Activated CD4-positive, alpha-beta T cell treated with anti-CD3 and anti-CD28 coated beads for 36 hours (primary cell): ENCODE measurements at regions of chr5 and their contacts with region 1.

Region 1: GRCh38 chr5:40223884-40224402 is 455.8 kb upstream of the PTGER4 start:
- DNase-seq: peak; percentile 63
- ATAC-seq: peak; percentile 87
- H3K4me3 Mint-ChIP-seq: peak overlapping the region; percentile 50
- H3K27ac Mint-ChIP-seq: peak overlapping the region; percentile 94
- H3K4me1 Mint-ChIP-seq: peaks cover 64% of the 10 kb centered on the region
- H3K27me3 Mint-ChIP-seq: no peaks in the 10 kb centered on the region

Region 2: GRCh38 chr5:40171971-40172370 is 52.0 kb before region 1 on chr5:
- CTCF ChIA-PET with region 1: no interaction called
- POLR2A ChIA-PET with region 1: no interaction called
- intact Hi-C with region 1: loop called in 1 of 2 experiments (anchors 5 kb)
- DNase-seq: no peak
- ATAC-seq: no peak
- H3K4me3 Mint-ChIP-seq: no peak overlapping the region
- H3K27ac Mint-ChIP-seq: no peak overlapping the region
- H3K4me1 Mint-ChIP-seq: peaks cover 13% of the 10 kb centered on the region
- H3K27me3 Mint-ChIP-seq: no peaks in the 10 kb centered on the region

Region 3: DNA sequence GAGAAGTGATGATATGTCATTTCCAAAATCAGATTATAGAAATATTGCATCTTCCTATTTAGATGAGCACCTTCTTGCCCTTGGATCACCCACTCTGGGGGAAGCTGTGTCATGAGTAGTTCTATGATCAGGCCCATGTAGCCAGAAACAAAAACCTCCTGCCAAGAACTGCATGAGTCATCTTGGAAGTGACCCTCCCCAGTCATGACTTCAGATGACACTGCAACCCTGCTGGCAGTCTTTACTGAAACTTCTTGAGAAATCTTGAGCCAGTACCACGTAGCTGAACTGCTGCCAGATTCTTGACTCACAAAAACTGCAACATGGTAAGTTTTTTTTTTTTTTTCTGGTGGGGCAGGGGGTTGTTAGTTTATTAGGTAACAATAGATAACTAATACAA is 16.2 kb after region 1 on chr5:
- CTCF ChIA-PET with region 1: interaction called, 3 read pairs
- POLR2A ChIA-PET with region 1: no interaction called
- intact Hi-C with region 1: loop called (anchors 1 kb)
- DNase-seq: peak; percentile 74
- ATAC-seq: peak; percentile 91
- H3K4me3 Mint-ChIP-seq: no peak overlapping the region
- H3K27ac Mint-ChIP-seq: no peak overlapping the region
- H3K4me1 Mint-ChIP-seq: peaks cover 28% of the 10 kb centered on the region
- H3K27me3 Mint-ChIP-seq: no peaks in the 10 kb centered on the region

Region 4: DNA sequence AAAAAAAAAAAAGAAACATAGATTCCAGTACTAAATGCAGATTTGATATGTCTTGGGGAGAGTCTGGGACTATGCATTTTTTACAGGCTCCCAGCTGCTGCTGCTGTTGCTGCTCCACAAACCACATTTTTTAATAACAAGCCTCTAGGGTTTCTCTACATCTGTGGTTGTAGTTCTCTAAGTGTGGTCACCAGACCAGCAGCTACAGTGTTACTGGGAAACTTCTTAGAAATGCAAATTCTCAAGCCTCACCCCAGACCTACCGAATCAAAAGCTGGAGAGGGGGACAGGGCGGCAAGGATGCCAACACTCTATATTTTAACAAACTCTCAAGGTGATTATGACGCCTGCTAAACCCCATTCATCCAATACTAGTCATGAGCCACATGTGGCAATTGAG is 162.3 kb after region 1 on chr5:
- CTCF ChIA-PET with region 1: interaction called, 3 read pairs
- POLR2A ChIA-PET with region 1: interaction called, 6 read pairs
- intact Hi-C with region 1: loop called (anchors 1 kb)
- DNase-seq: peak; percentile 39
- ATAC-seq: peak; percentile 11
- H3K4me3 Mint-ChIP-seq: no peak overlapping the region
- H3K27ac Mint-ChIP-seq: peak overlapping the region; percentile 92
- H3K4me1 Mint-ChIP-seq: peaks cover 86% of the 10 kb centered on the region
- H3K27me3 Mint-ChIP-seq: no peaks in the 10 kb centered on the region

Region 5: DNA sequence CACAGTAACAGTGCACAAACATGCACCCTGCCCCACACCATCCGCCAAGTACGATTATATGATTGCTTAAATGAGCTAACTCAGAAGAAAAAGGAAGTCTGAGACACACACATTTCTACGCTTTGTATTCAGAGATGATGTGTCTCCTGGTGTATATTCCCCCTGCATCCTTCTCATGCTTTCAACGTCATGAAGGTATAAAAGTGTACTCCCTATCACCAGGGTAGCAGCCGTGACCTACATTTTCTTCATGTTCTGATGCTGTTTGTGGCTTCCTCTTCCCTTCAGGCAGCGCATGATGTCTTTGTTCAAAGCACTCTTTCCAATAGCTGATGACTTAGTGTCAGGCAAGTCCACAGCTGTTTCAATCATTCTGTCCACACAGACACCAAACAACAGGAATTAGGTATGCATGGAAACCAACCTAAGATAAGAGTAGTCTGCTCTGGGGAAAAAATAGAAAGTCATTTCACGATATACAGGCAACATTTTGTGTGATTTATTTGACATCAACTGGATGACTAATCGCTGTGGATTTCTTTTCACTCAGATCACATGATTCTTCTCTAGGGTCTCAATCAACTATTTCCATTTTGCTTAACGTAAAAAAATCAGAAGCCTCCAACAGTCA is 186.4 kb after region 1 on chr5:
- CTCF ChIA-PET with region 1: interaction called, 3 read pairs
- POLR2A ChIA-PET with region 1: interaction called, 4 read pairs
- intact Hi-C with region 1: loop called (anchors 1 to 2 kb)
- DNase-seq: peak; percentile 80
- ATAC-seq: peak; percentile 82
- H3K4me3 Mint-ChIP-seq: peak overlapping the region; percentile 58
- H3K27ac Mint-ChIP-seq: peak overlapping the region; percentile 94
- H3K4me1 Mint-ChIP-seq: peaks cover 67% of the 10 kb centered on the region
- H3K27me3 Mint-ChIP-seq: no peaks in the 10 kb centered on the region